ENCODE measurements at regions of chr5 and their contacts with region 1.

Region 1: DNA sequence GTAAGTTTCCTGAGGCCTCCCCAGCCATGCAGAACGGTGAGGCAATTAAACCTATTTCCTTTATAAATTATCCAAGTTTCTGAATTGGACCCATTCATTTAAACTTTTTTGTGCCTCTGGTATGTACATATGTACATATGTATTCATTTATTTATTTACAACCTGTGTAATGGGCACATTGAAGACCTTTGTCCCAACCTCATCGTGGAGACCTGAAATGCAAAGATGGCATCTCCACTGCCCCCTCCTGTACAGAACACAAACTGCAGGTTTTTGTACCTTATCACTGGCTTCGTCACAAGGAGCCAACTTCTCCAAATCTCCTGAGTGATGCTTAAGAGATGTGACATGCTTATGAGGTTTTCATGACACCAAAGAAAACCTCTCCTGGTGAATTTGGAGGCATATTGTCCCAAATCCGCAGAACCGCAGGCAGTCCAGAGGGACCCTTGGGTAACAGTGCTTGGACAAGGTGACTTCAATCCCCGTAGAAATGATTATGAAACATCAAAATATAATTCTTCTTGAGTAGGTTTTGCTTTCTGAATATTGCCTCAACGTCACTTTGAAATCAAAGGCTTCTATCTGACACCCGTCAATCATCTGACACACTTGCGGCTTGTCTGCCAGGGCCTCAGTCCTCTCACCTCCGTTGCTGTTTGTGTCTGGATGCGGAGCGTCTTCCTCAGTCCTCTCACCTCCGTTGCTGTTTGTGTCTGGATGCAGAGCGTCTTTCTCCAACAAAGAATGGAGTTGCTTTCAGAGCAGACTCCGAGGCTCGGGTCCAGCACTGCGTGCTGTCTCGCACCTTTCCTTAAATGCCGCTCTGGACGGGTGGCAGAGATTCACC is 135.0 kb upstream of the IRX4 start:
- DNase-seq: no peak
- ATAC-seq: no peak
- H3K4me3 Mint-ChIP-seq: no peak overlapping the region
- H3K27ac Mint-ChIP-seq: no peak overlapping the region
- H3K4me1 Mint-ChIP-seq: no peaks in the 10 kb centered on the region
- H3K27me3 Mint-ChIP-seq: no peaks in the 10 kb centered on the region
- CTCF ChIP-seq: no peak

Region 2: DNA sequence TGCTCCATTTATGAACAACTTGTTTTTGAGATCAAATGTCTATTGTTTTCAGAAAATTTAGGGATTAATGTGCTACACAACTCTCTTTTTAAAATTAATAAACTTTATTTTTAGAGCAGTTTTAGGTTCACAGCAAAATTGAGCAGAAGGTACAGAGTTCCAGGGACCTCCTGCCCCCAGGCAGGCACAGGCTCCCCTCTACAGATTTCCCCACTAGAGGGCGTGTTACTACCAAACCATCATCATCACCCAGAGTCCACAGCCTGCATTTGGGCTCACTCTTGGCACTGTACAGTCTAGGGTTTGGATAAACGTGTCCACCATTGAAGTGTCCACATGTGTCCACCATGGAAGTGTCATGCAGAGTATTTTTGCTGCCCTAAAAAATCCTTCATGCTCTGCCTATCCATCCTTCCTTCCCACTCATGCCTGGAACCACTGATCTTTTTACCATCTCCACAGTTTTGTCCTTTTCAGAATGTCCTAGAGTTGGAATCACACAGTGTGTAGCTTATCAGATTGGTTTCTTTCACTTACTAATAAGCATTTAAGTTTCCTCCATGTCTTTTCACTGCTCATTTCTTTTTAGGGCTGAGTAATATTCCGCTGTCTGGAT is 279.9 kb before region 1 on chr5:
- CTCF ChIA-PET with region 1: no interaction called
- POLR2A ChIA-PET with region 1: no interaction called
- intact Hi-C with region 1: loop called (anchors 5 kb)
- DNase-seq: no peak
- ATAC-seq: peak; percentile 56
- H3K4me3 Mint-ChIP-seq: no peak overlapping the region
- H3K27ac Mint-ChIP-seq: no peak overlapping the region
- H3K4me1 Mint-ChIP-seq: no peaks in the 10 kb centered on the region
- H3K27me3 Mint-ChIP-seq: peaks cover 8% of the 10 kb centered on the region
- CTCF ChIP-seq: no peak